PC-3 (cell line): ENCODE measurements at regions of chr1 and their contacts with region 1.

Region 1: DNA sequence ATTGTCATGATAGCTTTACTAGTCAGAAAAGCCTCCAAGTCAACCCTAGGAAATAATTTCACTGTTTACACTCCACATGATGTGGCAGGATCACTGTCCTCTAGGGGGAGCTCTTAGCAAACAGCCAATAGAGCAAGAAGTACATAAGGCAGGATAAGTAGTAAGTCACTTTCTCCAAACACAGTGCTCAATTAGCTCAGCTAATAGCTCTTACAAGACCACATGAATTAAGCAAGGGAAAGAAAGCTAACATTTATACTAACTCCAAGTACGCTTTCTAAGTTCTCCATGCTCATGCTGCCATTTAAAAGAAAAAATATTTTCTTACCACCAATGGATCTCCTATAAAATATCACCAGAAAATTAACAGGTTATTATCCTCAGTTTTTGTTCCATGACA is 66.9 kb upstream of the LRIF1 start:
- DNase-seq: peak; percentile 80
- ATAC-seq: peak; percentile 92
- H3K4me3 ChIP-seq: no peak overlapping the region
- H3K27ac ChIP-seq: no peak overlapping the region
- H3K4me1 ChIP-seq: no peaks in the 10 kb centered on the region
- H3K27me3 ChIP-seq: no peaks in the 10 kb centered on the region
- CTCF ChIP-seq: peak; percentile 95

Region 2: GRCh38 chr1:111082421-111083192 is 52.0 kb after region 1 on chr1:
- CTCF ChIA-PET with region 1: no interaction called
- POLR2A ChIA-PET with region 1: no interaction called
- intact Hi-C with region 1: no loop called
- DNase-seq: peak; percentile 8
- ATAC-seq: no peak
- H3K4me3 ChIP-seq: no peak overlapping the region
- H3K27ac ChIP-seq: no peak overlapping the region
- H3K4me1 ChIP-seq: no peaks in the 10 kb centered on the region
- H3K27me3 ChIP-seq: peaks cover 30% of the 10 kb centered on the region
- CTCF ChIP-seq: no peak

Region 3: GRCh38 chr1:111320106-111320879 is 289.7 kb after region 1 on chr1:
- CTCF ChIA-PET with region 1: interaction called, 10 read pairs
- POLR2A ChIA-PET with region 1: no interaction called
- intact Hi-C with region 1: no loop called
- DNase-seq: no peak
- ATAC-seq: no peak
- H3K4me3 ChIP-seq: no peak overlapping the region
- H3K27ac ChIP-seq: no peak overlapping the region
- H3K4me1 ChIP-seq: no peaks in the 10 kb centered on the region
- H3K27me3 ChIP-seq: peaks cover 19% of the 10 kb centered on the region
- CTCF ChIP-seq: no peak